Activated CD8-positive, alpha-beta memory T cell treated with anti-CD3 and anti-CD28 coated beads, Interleukin-2, amount 10 ng/mL, durations not matched to agents 7 days and 5 days (primary cell): ENCODE measurements at regions of chr16 and their contacts with region 1.

Region 1: GRCh38 chr16:50354629-50355456 is 13.9 kb downstream of the BRD7 start:
- DNase-seq: no peak
- ATAC-seq: no peak
- H3K4me3 Mint-ChIP-seq: no peak overlapping the region
- H3K27ac Mint-ChIP-seq: no peak overlapping the region
- H3K4me1 Mint-ChIP-seq: peaks cover 11% of the 10 kb centered on the region
- H3K27me3 Mint-ChIP-seq: no peaks in the 10 kb centered on the region

Region 2: GRCh38 chr16:50305441-50306061 is 49.3 kb before region 1 on chr16:
- CTCF ChIA-PET with region 1: no interaction called
- DNase-seq: no peak
- ATAC-seq: no peak
- H3K4me3 Mint-ChIP-seq: no peak overlapping the region
- H3K27ac Mint-ChIP-seq: no peak overlapping the region
- H3K4me1 Mint-ChIP-seq: no peaks in the 10 kb centered on the region
- H3K27me3 Mint-ChIP-seq: no peaks in the 10 kb centered on the region

Region 3: GRCh38 chr16:50338371-50339231 is 16.2 kb before region 1 on chr16:
- CTCF ChIA-PET with region 1: interaction called, 29 read pairs
- DNase-seq: no peak
- ATAC-seq: peak; percentile 45
- H3K4me3 Mint-ChIP-seq: peak overlapping the region; percentile 10
- H3K27ac Mint-ChIP-seq: peak overlapping the region; percentile 70
- H3K4me1 Mint-ChIP-seq: peaks cover 37% of the 10 kb centered on the region
- H3K27me3 Mint-ChIP-seq: no peaks in the 10 kb centered on the region

Region 4: GRCh38 chr16:50368410-50369132 is 13.7 kb after region 1 on chr16 and contains the start of gene BRD7:
- CTCF ChIA-PET with region 1: interaction called, 34 read pairs
- DNase-seq: peak; percentile 70
- ATAC-seq: peak; percentile 86
- H3K4me3 Mint-ChIP-seq: peak within 1 kb of the TSS; percentile 95
- H3K27ac Mint-ChIP-seq: peak within 1 kb of the TSS; percentile 88
- H3K4me1 Mint-ChIP-seq: peaks cover 41% of the 10 kb centered on the region
- H3K27me3 Mint-ChIP-seq: peaks cover 1% of the 10 kb centered on the region
- total RNA-seq, gene BRD7: 85.0 to 102 TPM